Heart right ventricle (tissue), 16 donors: ENCODE measurements at regions of chr9 and their contacts with region 1.

Region 1: DNA sequence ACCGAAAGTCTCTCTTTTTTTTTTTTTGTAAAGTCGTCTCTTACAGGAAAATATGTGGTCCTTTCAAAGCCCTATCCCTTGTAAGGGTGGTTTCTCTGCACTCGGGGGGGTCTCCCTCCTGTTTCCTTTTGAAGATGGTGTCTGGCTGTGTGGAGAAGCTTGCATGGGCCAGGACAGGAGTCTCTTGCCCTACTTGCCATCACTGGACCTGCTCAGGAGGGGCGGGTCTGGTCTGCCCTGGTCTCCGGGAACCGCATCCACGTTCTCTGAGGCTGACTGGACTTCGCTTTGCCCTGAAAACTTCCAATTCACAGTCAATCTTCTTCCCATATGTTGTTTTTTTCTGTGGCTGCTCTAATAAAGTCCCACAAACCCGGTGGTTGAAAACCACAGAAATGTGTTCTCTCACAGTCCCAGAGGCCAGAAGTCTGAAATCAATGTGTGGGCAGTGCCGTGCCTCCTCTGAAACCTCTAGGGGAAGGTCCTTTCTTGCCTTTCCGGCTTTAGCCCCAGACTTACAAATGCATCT is 92.9 kb upstream of the IER5L start:
- DNase-seq: no peak
- ATAC-seq: no peak
- H3K4me3 ChIP-seq: no peak overlapping the region
- H3K27ac ChIP-seq: peak overlapping the region in 3 of 10 donors; percentile 15 to 36 (median 15)
- H3K4me1 ChIP-seq: peaks cover 0 to 16% (median 0%) of the 10 kb centered on the region in 9 donors
- H3K27me3 ChIP-seq: peaks cover 0 to 5% (median 0%) of the 10 kb centered on the region in 7 donors
- CTCF ChIP-seq: no peak

Region 2: DNA sequence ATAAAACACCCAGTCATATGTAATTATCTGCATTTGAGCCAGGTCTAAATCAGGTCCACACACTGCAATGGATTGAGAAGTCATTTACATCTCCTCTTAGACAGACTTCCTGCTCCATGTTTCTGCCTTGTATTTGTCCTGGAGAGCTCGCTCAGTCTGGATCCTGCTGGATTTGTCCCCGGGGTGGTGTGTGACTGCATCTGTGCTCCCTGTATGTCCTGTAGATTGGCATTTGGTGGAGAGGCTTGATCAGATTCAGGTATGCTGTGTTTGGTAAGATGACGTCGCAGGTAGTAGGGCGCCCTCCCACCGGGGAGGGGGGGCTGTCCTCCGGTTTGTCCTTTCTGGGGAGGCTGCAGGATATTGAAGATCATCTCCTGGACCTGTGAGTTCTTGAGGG is 59.3 kb before region 1 on chr9:
- intact Hi-C with region 1: no loop called
- DNase-seq: no peak
- ATAC-seq: no peak
- H3K4me3 ChIP-seq: no peak overlapping the region
- H3K27ac ChIP-seq: no peak overlapping the region
- H3K4me1 ChIP-seq: no peaks in the 10 kb centered on the region
- H3K27me3 ChIP-seq: no peaks in the 10 kb centered on the region
- CTCF ChIP-seq: no peak

Region 3: DNA sequence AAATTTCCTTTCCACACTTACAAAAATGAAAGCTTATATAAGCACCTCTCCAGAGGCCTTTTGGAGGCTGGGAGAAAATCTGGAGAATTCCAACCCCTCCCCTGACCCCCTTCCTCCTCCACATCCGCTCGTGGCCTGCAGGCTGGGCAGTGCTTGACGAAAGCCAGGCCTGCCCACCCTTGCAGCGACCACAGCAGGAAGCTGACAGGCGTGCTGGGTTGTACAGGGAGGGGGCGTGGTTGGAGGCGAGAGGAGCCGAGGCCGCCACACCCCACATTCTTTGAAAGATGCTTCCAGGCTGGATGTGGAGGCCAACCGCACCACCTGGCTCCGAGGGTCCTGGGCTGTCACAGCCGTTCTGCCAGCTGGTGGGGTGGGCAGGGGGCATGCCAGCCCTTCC is 45.2 kb before region 1 on chr9:
- intact Hi-C with region 1: no loop called
- DNase-seq: peak; percentile 75 to 90
- ATAC-seq: peak; percentile 84 to 97 (median 94)
- H3K4me3 ChIP-seq: no peak overlapping the region
- H3K27ac ChIP-seq: peak overlapping the region; percentile 4 to 91 (median 75)
- H3K4me1 ChIP-seq: peaks cover 0 to 28% (median 14%) of the 10 kb centered on the region in 9 donors
- H3K27me3 ChIP-seq: no peaks in the 10 kb centered on the region
- CTCF ChIP-seq: peak in 1 of 9 donors; percentile 24

Region 4: GRCh38 chr9:129237195-129237611 is 33.8 kb before region 1 on chr9:
- intact Hi-C with region 1: no loop called
- DNase-seq: no peak
- ATAC-seq: peak in 3 of 8 donors; percentile 42 to 60 (median 48)
- H3K4me3 ChIP-seq: peak overlapping the region in 1 of 10 donors; percentile 20
- H3K27ac ChIP-seq: peak overlapping the region in 1 of 10 donors; percentile 13
- H3K4me1 ChIP-seq: peaks cover 0 to 13% (median 0%) of the 10 kb centered on the region in 9 donors
- H3K27me3 ChIP-seq: no peaks in the 10 kb centered on the region
- CTCF ChIP-seq: no peak

Region 5: DNA sequence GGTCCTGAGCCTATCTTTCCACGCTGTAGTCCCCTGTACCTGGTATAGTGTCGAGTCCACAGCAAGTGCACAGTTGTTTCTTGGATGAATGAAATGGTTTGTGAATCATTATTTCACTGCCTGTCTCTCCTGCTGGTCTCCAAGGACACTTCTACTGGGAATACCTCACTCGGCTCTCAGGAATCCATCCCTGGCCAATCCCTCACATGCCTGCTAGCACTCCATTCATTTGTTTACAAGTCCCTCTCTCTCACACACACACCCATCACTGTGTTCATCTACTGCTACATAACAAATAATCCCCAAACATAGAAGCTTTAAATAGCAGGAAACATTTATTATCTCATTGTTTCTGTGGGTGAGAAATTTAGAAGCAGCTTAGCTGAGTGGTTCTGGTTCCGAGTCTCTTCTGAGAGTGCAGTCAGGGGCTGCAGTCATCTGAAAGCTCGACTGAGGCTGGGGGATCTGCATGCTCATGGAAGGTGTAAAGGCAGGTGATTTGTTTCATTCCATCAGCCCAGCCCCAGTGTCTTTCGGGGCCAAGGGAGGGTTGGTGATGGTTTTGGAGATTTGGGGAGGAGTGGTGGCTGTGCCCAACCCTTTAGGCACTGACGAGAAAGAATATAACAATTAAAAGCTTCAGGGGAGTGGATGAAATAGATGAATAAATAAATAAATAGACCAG is 39.8 kb after region 1 on chr9:
- intact Hi-C with region 1: loop called in 1 of 10 experiments (anchors 5 kb)
- DNase-seq: no peak
- ATAC-seq: no peak
- H3K4me3 ChIP-seq: no peak overlapping the region
- H3K27ac ChIP-seq: no peak overlapping the region
- H3K4me1 ChIP-seq: peaks cover 0 to 12% (median 7%) of the 10 kb centered on the region in 9 donors
- H3K27me3 ChIP-seq: no peaks in the 10 kb centered on the region
- CTCF ChIP-seq: no peak